Calu3 (cell line): ENCODE measurements at regions of chr12 and their contacts with region 1.

Region 1: DNA sequence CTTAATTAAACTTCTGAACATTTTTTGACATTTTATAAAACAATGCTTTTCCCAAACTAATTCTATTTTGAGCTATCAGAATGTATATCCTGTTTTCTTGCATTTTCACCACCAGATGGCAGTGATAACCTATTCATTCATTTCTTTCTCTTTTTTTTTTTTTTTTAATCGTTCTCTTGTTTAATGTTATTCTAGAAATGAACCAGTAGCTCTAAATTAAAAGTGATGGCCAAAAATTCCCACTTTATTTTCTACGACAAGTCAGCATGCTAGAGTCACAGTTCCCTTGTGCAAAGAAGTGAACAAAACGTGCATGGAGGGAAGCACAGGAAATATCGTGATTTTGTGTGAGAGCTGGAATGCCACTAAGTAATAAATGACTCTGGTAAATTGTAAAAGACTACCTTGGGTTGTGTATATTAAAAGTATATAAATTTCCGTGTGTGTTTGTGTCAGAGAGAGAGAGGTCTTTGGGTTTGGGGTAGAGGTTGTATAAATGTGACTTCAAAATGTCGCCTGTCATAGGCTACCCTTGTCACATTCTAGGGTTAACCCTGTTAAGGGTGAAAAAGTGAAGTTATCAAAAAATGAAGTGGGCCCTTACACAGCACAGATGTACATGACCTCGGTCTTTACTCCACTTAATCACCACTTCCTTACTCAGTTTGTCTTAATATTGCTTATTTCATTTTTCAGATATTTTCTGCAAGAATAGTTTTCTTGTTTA is 40.4 kb upstream of the LDHB start:
- DNase-seq: no peak
- H3K4me3 Mint-ChIP-seq: no peak overlapping the region
- H3K27ac Mint-ChIP-seq: no peak overlapping the region
- H3K4me1 Mint-ChIP-seq: no peaks in the 10 kb centered on the region
- H3K27me3 Mint-ChIP-seq: no peaks in the 10 kb centered on the region
- CTCF ChIP-seq: peak; percentile 49

Region 2: DNA sequence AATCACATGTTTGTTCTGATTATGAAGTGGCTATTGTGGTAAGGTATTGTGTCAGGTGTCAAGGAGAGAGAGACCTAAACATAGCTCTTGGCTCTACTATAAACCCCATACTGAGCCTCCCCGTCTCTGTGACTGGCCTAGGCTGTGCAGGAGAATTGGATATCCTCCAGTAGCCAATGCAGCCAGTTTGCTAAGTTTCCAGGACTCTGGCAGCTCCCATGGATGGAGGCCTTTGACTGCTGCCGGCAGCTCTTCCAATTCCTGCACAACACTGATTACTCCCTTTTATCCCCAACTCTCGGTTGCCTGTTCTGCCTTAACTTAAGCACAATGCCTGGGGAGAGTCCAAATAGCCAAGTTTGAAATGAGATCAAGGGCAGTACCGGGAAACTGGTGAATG is 183.9 kb after region 1 on chr12:
- CTCF ChIA-PET with region 1: no interaction called
- intact Hi-C with region 1: loop called (anchors 10 kb)
- DNase-seq: no peak
- H3K4me3 Mint-ChIP-seq: no peak overlapping the region
- H3K27ac Mint-ChIP-seq: no peak overlapping the region
- H3K4me1 Mint-ChIP-seq: no peaks in the 10 kb centered on the region
- H3K27me3 Mint-ChIP-seq: no peaks in the 10 kb centered on the region
- CTCF ChIP-seq: no peak

Region 3: DNA sequence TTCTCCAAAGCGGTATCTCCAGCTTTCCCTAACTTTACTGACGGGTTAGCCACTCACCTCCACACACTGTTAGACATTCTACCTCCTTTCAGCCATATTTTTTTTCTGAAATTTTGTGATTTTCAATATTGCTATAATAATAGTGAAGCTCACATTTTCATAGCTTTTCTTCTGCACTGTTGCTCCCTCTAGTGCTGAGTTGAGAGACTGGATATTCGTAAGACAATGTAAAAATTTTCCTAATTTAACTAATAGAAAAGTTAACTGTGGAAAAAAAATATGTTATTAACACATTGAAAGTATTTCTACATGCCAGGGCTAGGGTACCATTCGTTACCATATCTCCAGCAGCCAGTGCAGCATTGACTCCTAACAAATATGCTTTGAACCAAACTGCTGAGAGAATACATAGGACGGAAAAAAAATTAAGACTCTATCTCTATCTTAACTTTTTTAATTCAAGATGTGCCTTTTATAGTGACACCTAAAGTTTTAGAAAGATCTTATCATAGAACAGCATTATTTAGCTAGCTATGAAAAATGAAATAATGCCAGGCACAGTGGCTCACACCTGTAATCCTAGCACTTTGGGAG is 291.8 kb after region 1 on chr12:
- CTCF ChIA-PET with region 1: interaction called, 66 read pairs
- intact Hi-C with region 1: loop called (anchors 1 kb)
- DNase-seq: peak; percentile 2
- H3K4me3 Mint-ChIP-seq: no peak overlapping the region
- H3K27ac Mint-ChIP-seq: no peak overlapping the region
- H3K4me1 Mint-ChIP-seq: no peaks in the 10 kb centered on the region
- H3K27me3 Mint-ChIP-seq: peaks cover 13% of the 10 kb centered on the region
- CTCF ChIP-seq: peak; percentile 43

Region 4: GRCh38 chr12:22018860-22019259 is 320.8 kb after region 1 on chr12:
- CTCF ChIA-PET with region 1: interaction called, 28 read pairs
- intact Hi-C with region 1: loop called (anchors 2 kb)
- DNase-seq: no peak
- H3K4me3 Mint-ChIP-seq: no peak overlapping the region
- H3K27ac Mint-ChIP-seq: no peak overlapping the region
- H3K4me1 Mint-ChIP-seq: peaks cover 9% of the 10 kb centered on the region
- H3K27me3 Mint-ChIP-seq: no peaks in the 10 kb centered on the region
- CTCF ChIP-seq: peak; percentile 34